ENCODE measurements at regions of chr13 and their contacts with region 1.

Region 1: DNA sequence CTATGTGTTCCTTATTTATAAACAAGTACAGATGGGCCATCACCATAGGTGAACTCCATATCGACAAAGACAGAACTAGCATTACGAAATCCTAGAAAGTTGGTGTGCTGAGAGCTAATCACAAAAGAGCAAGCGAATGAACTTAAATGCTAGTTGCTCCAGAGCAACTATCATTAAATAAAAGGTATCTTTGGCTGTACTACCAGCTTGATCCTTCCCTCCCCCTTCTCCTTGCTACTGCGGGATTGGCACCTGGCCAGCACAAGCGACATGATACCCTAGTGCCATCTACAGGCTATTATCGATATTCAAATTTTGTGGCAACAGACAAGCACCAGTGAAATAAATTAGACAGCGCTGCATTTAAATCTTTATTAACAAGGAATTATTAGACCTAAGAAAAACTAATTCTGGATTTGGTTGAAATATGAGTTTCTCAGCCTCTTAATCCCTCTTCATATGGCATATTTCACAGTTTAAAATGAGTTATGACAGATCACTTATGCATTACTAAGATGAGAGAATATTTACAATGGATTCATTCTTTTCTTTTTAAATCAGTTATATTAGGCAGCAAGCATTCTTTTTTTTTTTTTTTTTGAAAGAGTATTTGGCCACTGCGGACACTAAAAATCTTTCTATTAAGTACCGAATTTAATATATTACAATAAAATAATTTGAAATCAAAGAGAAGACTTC is 5.8 kb downstream of the PCDH9 start:
- DNase-seq: peak; percentile 66 to 71
- ATAC-seq: peak; percentile 72 to 91 (median 86)
- H3K4me3 ChIP-seq: peak overlapping the region in 9 of 10 donors; percentile 1 to 54 (median 39)
- H3K27ac ChIP-seq: peak overlapping the region in 5 of 10 donors; percentile 10 to 66 (median 26)
- H3K4me1 ChIP-seq: peaks cover 0 to 69% (median 13%) of the 10 kb centered on the region in 9 donors
- H3K27me3 ChIP-seq: peaks cover 0 to 16% (median 0%) of the 10 kb centered on the region in 7 donors
- CTCF ChIP-seq: peak; percentile 55 to 83 (median 73)

Region 2: GRCh38 chr13:65926750-65927171 is 1297.5 kb before region 1 on chr13:
- intact Hi-C with region 1: loop called in 1 of 10 experiments (anchors 10 kb)
- DNase-seq: peak; percentile 11 to 52
- ATAC-seq: peak in 7 of 8 donors; percentile 33 to 92 (median 78)
- H3K4me3 ChIP-seq: peak overlapping the region in 2 of 10 donors; percentile 3 to 7
- H3K27ac ChIP-seq: no peak overlapping the region
- H3K4me1 ChIP-seq: peaks cover 0 to 7% (median 0%) of the 10 kb centered on the region in 9 donors
- H3K27me3 ChIP-seq: no peaks in the 10 kb centered on the region
- CTCF ChIP-seq: peak in 8 of 9 donors; percentile 11 to 66 (median 50)

Region 3: GRCh38 chr13:66624302-66624701 is 600.0 kb before region 1 on chr13:
- intact Hi-C with region 1: loop called in 2 of 10 experiments (anchors 5 to 10 kb)
- DNase-seq: no peak
- ATAC-seq: peak; percentile 51 to 98 (median 82)
- H3K4me3 ChIP-seq: no peak overlapping the region
- H3K27ac ChIP-seq: peak overlapping the region in 2 of 10 donors; percentile 4 to 32
- H3K4me1 ChIP-seq: peaks cover 0 to 8% (median 0%) of the 10 kb centered on the region in 9 donors
- H3K27me3 ChIP-seq: no peaks in the 10 kb centered on the region
- CTCF ChIP-seq: peak in 2 of 9 donors; percentile 7 to 15

Region 4: DNA sequence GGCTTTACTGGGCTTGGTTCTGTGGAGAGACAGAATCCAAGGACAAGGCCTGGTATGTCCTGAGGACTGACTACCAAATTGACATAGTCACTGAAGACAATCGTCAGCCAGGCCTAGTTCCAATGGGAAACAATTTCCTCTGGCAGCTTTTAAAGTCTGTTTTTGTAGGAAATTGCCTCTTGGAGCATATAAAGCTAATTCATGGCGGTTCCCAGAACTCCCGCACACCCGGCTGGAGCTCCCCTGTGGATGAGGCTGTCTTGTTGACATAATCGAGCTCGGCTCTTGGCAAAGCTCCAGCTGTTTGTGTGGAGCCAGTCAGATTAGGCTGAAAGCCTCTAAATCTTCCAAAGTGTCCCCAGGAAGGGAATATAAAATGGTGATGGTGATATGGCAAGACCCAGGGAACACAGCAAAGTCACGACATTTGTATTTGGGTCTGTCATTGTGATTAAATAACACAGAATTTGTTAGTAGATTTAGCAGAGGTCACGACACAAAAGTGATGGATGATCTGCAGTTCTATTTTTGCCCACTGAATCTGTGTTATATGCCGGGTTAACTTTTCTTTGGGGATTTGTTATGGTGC is 389.2 kb before region 1 on chr13:
- intact Hi-C with region 1: loop called in 1 of 10 experiments (anchors 10 kb)
- DNase-seq: peak; percentile 77 to 90
- ATAC-seq: peak; percentile 64 to 94 (median 88)
- H3K4me3 ChIP-seq: no peak overlapping the region
- H3K27ac ChIP-seq: peak overlapping the region in 8 of 10 donors; percentile 5 to 74 (median 44)
- H3K4me1 ChIP-seq: peaks cover 0 to 19% (median 6%) of the 10 kb centered on the region in 9 donors
- H3K27me3 ChIP-seq: no peaks in the 10 kb centered on the region
- CTCF ChIP-seq: peak in 1 of 9 donors; percentile 15

Region 5: DNA sequence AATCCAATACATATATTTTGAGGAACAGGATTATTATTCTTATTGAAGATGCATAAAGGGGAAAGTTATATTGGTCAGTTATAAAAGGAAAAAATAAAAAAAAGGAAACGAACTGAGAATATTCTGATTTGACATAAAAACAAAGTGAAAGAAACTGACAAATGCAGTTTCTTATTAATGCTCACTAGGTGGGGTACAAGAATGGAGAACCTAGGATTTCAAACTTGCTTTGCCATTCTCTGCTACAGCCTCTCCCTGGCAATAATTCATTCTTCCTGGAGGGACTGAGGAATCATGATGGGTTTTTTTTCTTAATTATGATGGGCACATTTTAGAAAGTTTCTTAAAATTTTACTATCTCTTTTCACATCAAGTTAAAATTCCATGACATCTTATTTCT is 149.1 kb before region 1 on chr13:
- intact Hi-C with region 1: loop called (anchors 2 to 10 kb)
- DNase-seq: no peak
- ATAC-seq: peak in 7 of 8 donors; percentile 43 to 77 (median 72)
- H3K4me3 ChIP-seq: peak overlapping the region in 6 of 10 donors; percentile 28 to 37 (median 35)
- H3K27ac ChIP-seq: no peak overlapping the region
- H3K4me1 ChIP-seq: peaks cover 0 to 3% (median 0%) of the 10 kb centered on the region in 9 donors
- H3K27me3 ChIP-seq: no peaks in the 10 kb centered on the region
- CTCF ChIP-seq: peak in 6 of 9 donors; percentile 33 to 62 (median 52)